HEK293 (cell line): ENCODE measurements at regions of chr17 and their contacts with region 1.

Region 1: DNA sequence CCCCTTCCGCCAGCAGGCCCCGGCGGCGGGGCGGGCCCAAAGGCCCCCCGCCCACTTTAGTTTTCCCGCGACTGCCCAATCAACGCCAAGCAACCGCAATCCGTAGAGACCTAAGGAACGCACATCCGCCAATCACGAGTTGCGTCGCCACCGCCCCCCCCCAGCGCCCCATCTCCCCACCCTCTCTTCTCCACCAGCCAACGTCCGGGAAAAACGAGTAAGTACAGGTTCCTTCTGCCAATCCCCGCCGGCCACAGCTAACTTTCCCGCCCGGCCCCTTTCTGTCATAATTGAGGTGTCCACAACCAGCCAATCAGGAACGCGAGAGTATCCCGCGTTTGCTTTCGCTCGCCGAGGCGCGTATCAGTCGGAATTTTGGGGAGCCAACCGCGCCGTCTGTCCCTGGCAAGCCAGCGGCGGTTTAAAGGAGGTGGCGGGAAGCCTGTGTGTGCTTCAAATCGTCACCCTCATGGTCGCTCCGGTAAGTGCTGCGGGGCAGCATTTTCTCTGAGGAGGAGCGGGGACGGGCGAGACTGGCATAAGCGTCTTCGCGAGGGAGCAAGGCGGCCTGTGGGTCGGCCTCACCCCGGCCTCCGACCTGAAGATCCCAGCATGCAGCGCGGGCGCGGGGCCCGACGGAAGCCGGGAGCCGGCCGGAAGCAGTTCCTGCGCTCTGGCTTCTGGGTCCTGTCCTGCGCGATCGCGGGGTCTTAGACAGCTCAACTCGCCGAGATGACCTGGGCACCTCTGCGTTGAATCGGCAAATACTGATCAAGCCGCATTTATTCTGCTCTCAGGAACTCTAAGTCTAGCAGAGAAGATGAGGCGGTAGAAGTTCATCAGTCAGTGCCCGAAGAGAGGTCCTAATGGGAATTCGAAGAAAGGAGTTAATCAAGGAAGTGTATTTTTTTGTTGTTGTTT is at the start of gene MIS12:
- H3K4me3 ChIP-seq: peak within 1 kb of the TSS; percentile 96
- H3K27ac ChIP-seq: peak within 1 kb of the TSS; percentile 100
- H3K4me1 ChIP-seq: no peaks in the 10 kb centered on the region
- CTCF ChIP-seq: no peak

Region 2: GRCh38 chr17:5500589-5501391 is 14.3 kb after region 1 on chr17:
- CTCF ChIA-PET with region 1: no interaction called
- POLR2A ChIA-PET with region 1: interaction called, 73 read pairs
- H3K4me3 ChIP-seq: peak overlapping the region; percentile 60
- H3K27ac ChIP-seq: no peak overlapping the region; the same call in 1 of the 2 replicates
- H3K4me1 ChIP-seq: peaks cover 3% of the 10 kb centered on the region; the same call in 1 of the 2 replicates
- CTCF ChIP-seq: no peak